Psoas muscle (tissue), 8 donors: ENCODE measurements at regions of chr7 and their contacts with region 1.

Region 1: DNA sequence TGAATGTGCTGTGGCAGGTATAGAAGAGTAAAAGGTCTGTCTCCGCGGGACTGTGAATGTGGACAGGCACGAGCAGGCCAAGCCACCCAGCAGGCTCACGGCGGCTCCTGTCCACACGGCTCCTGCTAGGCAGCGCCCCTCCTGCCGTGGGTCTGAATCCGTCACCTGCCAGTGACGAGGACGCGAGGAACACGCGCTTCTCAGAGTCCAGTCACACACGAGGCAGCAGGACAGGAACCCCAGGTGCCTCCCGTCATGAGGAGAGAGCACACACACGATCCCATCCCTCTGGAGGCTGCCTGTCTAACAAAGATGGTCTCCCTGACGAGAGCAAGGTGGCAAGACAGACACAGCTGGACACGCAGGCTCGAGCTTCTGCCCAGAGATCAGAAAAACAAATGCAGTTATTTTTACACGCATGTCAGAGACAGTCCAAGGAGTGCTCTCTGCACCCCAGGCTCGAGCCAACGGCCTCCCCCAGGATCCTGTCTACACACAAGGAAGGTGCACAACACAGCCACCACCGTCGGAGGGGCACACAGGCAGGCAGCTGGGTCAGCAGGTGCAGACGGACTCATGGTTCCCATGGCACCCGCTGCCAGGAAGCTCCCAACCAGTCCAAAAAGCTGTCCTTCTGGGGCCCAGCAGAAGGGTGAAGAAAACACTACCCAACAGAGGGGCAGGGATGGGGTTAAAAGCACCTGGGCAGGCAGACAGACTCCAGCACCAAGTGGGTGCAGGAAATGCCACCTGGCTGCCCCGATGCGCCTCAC is 103.2 kb downstream of the MAD1L1 start:
- DNase-seq: no peak
- ATAC-seq: peak; percentile 29 to 61 (median 42)
- H3K4me3 ChIP-seq: no peak overlapping the region
- H3K27ac ChIP-seq: no peak overlapping the region
- H3K4me1 ChIP-seq: peaks cover 5% of the 10 kb centered on the region
- H3K27me3 ChIP-seq: no peaks in the 10 kb centered on the region
- CTCF ChIP-seq: no peak

Region 2: DNA sequence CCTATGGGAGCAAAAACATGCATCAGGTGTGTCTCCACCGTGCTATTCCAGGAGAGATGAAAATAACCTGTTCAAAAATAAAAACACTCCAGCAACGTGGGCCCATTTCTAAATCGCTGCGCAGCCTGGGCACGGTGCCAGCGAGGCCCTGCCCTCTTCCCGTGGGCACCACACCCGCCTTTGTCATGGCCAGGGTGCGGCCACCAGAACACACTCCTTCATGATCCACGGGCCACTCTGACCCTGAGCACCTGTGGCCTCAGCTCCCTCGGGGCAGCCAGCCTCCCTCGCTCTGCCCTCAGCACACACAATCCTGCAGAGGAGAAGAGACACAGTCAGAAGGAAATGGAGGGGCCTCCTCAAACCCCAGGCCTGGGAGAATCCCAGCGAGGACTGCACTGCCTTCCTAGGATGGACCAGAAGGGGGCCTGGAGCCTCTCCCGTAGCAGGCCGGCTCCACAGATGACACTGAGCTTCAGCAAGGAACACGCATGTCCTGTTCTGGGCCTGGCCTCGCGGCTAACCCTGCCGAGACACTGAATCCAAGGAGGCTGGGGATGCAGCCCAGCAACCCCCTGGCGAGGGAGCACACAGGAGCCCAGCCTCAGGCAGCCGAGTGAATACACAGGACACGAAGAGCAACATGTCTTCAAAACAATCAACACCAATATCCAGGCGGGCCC is 65.8 kb before region 1 on chr7:
- intact Hi-C with region 1: no loop called
- DNase-seq: no peak
- ATAC-seq: peak; percentile 31 to 54 (median 38)
- H3K4me3 ChIP-seq: no peak overlapping the region
- H3K27ac ChIP-seq: no peak overlapping the region
- H3K4me1 ChIP-seq: peaks cover 6% of the 10 kb centered on the region
- H3K27me3 ChIP-seq: no peaks in the 10 kb centered on the region
- CTCF ChIP-seq: peak; percentile 20

Region 3: GRCh38 chr7:2313450-2314208 is 184.1 kb after region 1 on chr7:
- intact Hi-C with region 1: no loop called
- DNase-seq: no peak
- ATAC-seq: peak in 3 of 4 donors; percentile 15 to 31 (median 28)
- H3K4me3 ChIP-seq: peak overlapping the region; percentile 91
- H3K27ac ChIP-seq: peak overlapping the region; percentile 69
- H3K4me1 ChIP-seq: no peaks in the 10 kb centered on the region
- H3K27me3 ChIP-seq: no peaks in the 10 kb centered on the region
- CTCF ChIP-seq: no peak

Region 4: DNA sequence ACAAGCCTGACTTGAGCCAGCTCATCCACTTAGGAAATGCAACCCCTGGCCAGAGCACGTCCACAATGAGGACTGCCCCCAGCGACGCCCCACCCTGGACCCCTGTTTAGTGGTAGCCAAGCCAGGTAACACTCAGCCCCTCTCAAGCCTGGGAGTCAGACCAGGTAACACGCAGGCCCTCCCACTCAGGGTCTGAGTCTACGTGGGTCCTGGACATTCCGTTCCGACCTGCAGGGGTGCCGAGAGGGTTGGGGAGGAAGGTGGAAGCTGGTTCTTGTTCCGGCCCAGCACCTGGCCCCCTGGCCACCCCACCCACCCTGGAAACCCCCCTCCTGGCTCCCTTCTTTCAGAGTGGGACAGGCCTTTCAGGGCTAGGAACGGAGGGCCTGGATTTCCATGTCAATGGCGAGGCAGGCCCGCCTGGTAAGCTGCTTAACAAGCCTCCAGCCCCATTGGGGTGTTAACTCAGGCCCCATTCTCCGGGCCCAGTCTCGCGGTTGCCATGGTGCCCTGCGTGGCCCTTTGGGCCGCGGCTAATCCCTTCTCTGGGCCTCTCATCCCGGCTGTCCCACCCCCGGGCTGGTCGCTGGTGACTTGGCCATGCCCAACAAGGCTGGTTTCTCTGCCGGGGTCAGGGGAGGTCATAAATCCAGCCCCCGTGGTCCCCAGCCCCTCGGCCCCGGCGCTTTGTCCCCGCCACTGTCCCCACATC is 370.4 kb after region 1 on chr7:
- intact Hi-C with region 1: loop called in 1 of 2 experiments (anchors 5 kb)
- DNase-seq: no peak
- ATAC-seq: no peak
- H3K4me3 ChIP-seq: no peak overlapping the region
- H3K27ac ChIP-seq: no peak overlapping the region
- H3K4me1 ChIP-seq: no peaks in the 10 kb centered on the region
- H3K27me3 ChIP-seq: peaks cover 0 to 28% (median 6%) of the 10 kb centered on the region in 3 donors
- CTCF ChIP-seq: no peak